ENCODE measurements at regions of chr6 and their contacts with region 1.

Region 1: DNA sequence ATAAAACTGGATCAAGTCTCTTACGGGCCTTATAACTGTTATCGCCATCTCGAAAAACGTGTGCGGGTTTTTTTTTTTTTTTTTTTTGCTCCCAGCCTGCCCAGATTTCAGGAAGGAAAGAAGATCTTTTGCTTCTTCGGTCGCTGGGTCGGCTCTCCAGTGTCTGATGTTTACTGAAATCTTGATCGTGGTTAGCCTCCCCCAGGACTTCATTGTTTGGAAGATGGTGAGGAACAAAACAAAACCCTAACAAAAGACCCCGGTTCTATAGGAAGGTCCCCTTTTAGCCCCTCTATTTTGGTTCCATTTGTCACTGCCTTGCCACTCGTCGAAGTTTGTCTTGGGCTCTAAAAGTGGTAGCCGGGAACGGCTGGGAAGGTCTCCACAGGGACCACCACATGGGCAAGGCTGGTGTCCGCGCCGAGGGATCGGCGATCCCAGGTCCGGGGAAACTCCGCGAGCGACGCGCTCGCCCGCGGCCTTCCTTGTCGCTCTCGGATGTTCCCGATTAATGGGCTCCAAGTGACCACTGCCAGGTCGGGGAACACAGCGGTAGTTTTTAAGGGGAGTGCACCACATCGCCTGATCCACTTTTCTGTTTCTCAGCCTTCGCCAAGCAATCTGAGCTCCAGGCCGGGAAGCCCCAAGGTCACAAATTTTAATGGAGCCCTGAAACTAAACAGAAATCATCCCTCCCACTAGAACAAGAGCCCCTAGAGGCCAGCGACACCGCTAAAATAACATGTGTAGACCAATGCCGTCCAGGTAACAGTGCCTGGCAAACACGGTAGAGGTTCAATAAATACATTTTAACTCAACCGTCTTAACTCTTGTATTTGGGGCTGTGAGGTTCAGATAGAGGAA is 27.0 kb downstream of the TRIM27 start:
- DNase-seq: peak; percentile 62 to 82 (median 82)
- ATAC-seq: peak; percentile 50 to 58
- H3K4me3 ChIP-seq: peak overlapping the region; percentile 74
- H3K27ac ChIP-seq: peak overlapping the region; percentile 100
- H3K4me1 ChIP-seq: no peaks in the 10 kb centered on the region
- H3K27me3 ChIP-seq: no peaks in the 10 kb centered on the region

Region 2: DNA sequence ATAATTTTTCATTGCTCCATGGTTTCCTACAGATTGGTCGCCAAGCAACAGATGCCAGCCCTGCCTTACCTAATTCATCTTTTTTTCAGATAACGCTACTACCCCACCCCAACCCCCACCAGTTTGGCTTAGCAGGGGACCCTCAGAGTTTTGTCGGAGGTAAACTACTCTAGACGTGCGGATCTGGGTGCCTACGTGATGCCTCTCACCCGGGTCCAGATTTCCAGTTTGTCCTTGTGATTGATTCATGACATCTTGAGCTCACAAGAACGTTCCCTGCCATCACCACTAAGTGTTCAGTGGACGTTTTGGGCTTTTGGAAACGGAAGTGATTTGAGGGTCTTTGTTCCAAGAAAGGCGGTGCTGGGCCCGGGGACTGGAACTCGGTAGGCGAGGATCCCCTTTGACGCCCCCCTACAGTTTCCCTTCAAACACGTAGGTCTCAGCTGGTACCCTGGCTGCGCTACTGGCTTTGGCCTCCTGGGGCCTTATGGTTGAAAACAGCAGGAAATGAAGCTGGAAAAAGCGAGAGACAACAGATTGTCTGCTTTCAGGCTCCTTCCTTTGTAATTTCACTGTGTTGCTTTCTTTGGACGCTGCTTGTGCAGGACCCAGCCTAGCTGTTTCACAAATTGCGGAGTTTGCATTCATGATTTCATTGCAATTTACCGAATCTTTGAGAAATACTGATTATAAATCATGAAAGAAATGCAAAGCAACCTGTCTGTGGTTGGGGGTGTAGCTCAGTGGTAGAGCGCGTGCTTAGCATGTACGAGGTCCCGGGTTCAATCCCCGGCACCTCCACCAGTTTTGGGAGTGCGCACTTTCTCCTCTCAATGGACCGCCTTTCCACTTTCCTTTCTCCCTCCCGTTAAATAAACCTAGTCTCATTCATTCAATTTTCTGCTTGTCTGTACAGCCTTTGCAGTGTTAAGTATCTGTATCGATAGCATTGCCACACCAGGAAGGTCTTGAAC is 290.0 kb before region 1 on chr6:
- intact Hi-C with region 1: no loop called
- DNase-seq: peak; percentile 25 to 58 (median 58)
- ATAC-seq: peak; percentile 64 to 83
- H3K4me3 ChIP-seq: no peak overlapping the region
- H3K27ac ChIP-seq: no peak overlapping the region
- H3K4me1 ChIP-seq: no peaks in the 10 kb centered on the region
- H3K27me3 ChIP-seq: no peaks in the 10 kb centered on the region

Region 3: GRCh38 chr6:28807682-28808280 is 89.0 kb before region 1 on chr6:
- intact Hi-C with region 1: no loop called
- DNase-seq: no peak
- ATAC-seq: no peak
- H3K4me3 ChIP-seq: no peak overlapping the region
- H3K27ac ChIP-seq: no peak overlapping the region
- H3K4me1 ChIP-seq: no peaks in the 10 kb centered on the region
- H3K27me3 ChIP-seq: peaks cover 2% of the 10 kb centered on the region

Region 4: GRCh38 chr6:28863604-28864320 is 33.0 kb before region 1 on chr6:
- intact Hi-C with region 1: loop called in 1 of 4 experiments (anchors 1 kb)
- DNase-seq: peak; percentile 57 to 80 (median 77)
- ATAC-seq: peak; percentile 88 to 90
- H3K4me3 ChIP-seq: peak overlapping the region; percentile 78
- H3K27ac ChIP-seq: no peak overlapping the region
- H3K4me1 ChIP-seq: peaks cover 5% of the 10 kb centered on the region
- H3K27me3 ChIP-seq: no peaks in the 10 kb centered on the region

Measured in right cardiac atrium (tissue), 5 donors.